ENCODE measurements at regions of chr18 and their contacts with region 1.

Region 1: GRCh38 chr18:22703883-22704585 is 229.1 kb upstream of the RBBP8 start:
- DNase-seq: no peak
- ATAC-seq: peak; percentile 93
- H3K4me3 ChIP-seq: no peak overlapping the region
- H3K27ac ChIP-seq: no peak overlapping the region
- H3K4me1 ChIP-seq: no peaks in the 10 kb centered on the region
- H3K27me3 ChIP-seq: no peaks in the 10 kb centered on the region
- CTCF ChIP-seq: peak; percentile 67 to 75 (median 74)
- EP300 ChIP-seq: no peak
- POLR2A ChIP-seq: no peak
- RAD21 ChIP-seq: peak; percentile 81

Region 2: GRCh38 chr18:21218630-21219261 is 1485.3 kb before region 1 on chr18:
- CTCF ChIA-PET with region 1: no interaction called
- POLR2A ChIA-PET with region 1: no interaction called
- RAD21 ChIA-PET with region 1: no interaction called
- SMC1A ChIA-PET with region 1: no interaction called
- in situ Hi-C with region 1: loop called (anchors 25 kb)
- intact Hi-C with region 1: no loop called
- DNase-seq: no peak
- ATAC-seq: no peak
- H3K4me3 ChIP-seq: no peak overlapping the region
- H3K27ac ChIP-seq: no peak overlapping the region
- H3K4me1 ChIP-seq: no peaks in the 10 kb centered on the region
- H3K27me3 ChIP-seq: no peaks in the 10 kb centered on the region
- CTCF ChIP-seq: no peak
- EP300 ChIP-seq: no peak
- POLR2A ChIP-seq: no peak
- RAD21 ChIP-seq: no peak

Region 3: DNA sequence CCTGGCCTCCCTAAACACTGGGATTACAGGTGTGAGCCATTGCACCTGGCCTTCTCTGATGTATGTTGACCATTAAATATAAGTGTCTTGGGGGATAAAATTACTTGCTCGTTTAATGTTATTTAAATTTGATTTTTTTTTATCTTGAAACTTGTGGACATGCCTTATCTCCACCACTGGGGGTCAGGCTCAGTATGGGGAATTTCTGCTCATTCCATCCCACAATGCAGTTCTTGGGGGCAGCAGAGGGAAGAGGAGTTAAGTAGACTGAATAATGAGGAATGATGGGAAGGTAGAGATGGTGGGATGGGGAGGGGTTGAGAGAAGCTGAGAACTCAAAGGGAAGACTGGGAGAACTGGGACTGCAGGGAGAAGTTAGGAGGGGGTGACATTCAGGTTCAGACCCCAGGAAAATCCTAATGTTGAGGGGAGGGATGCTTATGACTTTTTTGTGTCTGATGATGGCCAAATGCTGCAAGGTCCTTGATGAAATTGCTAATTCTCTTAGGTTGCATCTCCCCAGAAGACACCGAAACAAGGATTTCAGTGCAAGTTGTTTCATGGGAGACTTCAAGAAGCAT is 789.2 kb before region 1 on chr18:
- CTCF ChIA-PET with region 1: no interaction called
- POLR2A ChIA-PET with region 1: no interaction called
- RAD21 ChIA-PET with region 1: no interaction called
- SMC1A ChIA-PET with region 1: no interaction called
- in situ Hi-C with region 1: loop called (anchors 25 kb)
- intact Hi-C with region 1: loop called (anchors 10 kb)
- DNase-seq: no peak
- ATAC-seq: 0 out of 3 replicates have a peak, but pooled peaks have one; percentile 44
- H3K4me3 ChIP-seq: no peak overlapping the region
- H3K27ac ChIP-seq: no peak overlapping the region
- H3K4me1 ChIP-seq: peaks cover 4% of the 10 kb centered on the region; the same call in 1 of the 2 replicates
- H3K27me3 ChIP-seq: no peaks in the 10 kb centered on the region
- CTCF ChIP-seq: peak; percentile 42 to 49 (median 44); a peak in 5 of 6 replicates
- EP300 ChIP-seq: no peak
- POLR2A ChIP-seq: no peak
- RAD21 ChIP-seq: peak; percentile 62

Region 4: DNA sequence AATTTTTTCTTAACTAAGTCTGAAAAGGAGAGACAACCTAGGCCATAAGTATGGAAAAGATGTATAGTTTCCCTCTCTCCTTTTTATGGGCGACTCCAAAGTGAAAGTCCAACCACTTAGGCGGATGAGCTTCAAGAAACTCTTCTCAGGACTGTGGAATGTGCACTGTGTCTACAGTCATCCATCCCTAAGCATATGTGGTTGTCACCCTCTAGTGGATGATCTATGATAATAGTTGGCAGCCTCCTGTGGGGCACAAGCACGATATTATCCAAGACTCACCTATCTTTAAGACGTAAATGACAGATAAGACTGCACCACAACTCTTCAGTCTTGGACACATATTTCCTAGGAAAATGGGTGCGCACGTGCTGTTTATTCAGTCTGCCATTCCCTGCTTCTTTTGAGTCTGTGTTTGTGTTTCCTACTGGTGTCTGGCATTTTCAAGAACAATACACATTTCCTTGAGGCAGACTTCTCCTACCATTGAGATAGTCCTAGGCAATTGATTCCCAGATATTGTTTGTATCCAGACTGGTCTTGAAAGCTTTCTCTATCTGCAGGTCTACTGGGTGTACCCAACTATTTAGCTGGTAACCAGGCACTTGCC is 140.8 kb before region 1 on chr18:
- CTCF ChIA-PET with region 1: interaction called, 3 read pairs
- POLR2A ChIA-PET with region 1: no interaction called
- RAD21 ChIA-PET with region 1: interaction called, 3 read pairs
- SMC1A ChIA-PET with region 1: interaction called, 4 read pairs
- in situ Hi-C with region 1: no loop called
- intact Hi-C with region 1: loop called (anchors 2 kb)
- DNase-seq: peak; percentile 3
- ATAC-seq: peak; percentile 97
- H3K4me3 ChIP-seq: no peak overlapping the region
- H3K27ac ChIP-seq: no peak overlapping the region
- H3K4me1 ChIP-seq: no peaks in the 10 kb centered on the region
- H3K27me3 ChIP-seq: peaks cover 2 to 3% of the 10 kb centered on the region in 2 experiments; a peak in 2 of 4 replicates
- CTCF ChIP-seq: peak; percentile 46 to 67 (median 63); a peak in 5 of 6 replicates
- EP300 ChIP-seq: no peak
- POLR2A ChIP-seq: no peak
- RAD21 ChIP-seq: peak; percentile 79

Region 5: GRCh38 chr18:22670914-22671313 is 33.1 kb before region 1 on chr18:
- CTCF ChIA-PET with region 1: interaction called, 15 read pairs
- POLR2A ChIA-PET with region 1: no interaction called
- RAD21 ChIA-PET with region 1: no interaction called
- SMC1A ChIA-PET with region 1: interaction called, 4 read pairs
- in situ Hi-C with region 1: no loop called
- intact Hi-C with region 1: no loop called
- DNase-seq: peak; percentile 19
- ATAC-seq: peak; percentile 65
- H3K4me3 ChIP-seq: no peak overlapping the region
- H3K27ac ChIP-seq: 0 out of 2 replicates have a peak overlapping the region, but pooled peaks have one; percentile 37
- H3K4me1 ChIP-seq: peaks cover 4% of the 10 kb centered on the region; the same call in 1 of the 2 replicates
- H3K27me3 ChIP-seq: no peaks in the 10 kb centered on the region
- CTCF ChIP-seq: peak in 1 of 3 experiments; percentile 26; a peak in 2 of 6 replicates
- EP300 ChIP-seq: no peak
- POLR2A ChIP-seq: no peak
- RAD21 ChIP-seq: peak; percentile 33; the same call in 1 of the 2 replicates

Measured in GM12878 (cell line).